Dorsolateral prefrontal cortex (tissue), 120 donors: ENCODE measurements at regions of chr11 and their contacts with region 1.

Region 1: DNA sequence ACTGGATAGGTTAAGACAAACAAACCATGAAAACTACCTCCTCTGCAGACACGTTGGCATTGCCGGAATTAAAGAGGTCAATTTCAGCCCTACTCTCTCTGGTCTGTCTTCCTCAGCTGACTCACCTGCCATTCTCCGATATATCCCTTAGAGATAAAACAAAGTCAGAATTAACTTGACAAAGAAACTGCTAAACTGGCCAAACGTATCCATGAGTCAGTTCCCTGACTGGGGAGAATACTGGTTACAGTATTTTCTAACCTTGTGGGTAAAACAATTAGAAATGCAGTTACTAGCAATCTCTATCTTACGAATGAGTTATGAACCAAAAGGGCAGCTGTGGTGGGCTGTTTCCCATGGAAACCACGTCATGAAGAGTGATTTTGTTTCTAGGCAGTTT is 96.2 kb downstream of the RDX start:
- DNase-seq: no peak
- H3K4me3 ChIP-seq: no peak overlapping the region
- H3K27ac ChIP-seq: no peak overlapping the region
- H3K27me3 ChIP-seq: no peaks in the 10 kb centered on the region
- CTCF ChIP-seq: no peak

Region 2: DNA sequence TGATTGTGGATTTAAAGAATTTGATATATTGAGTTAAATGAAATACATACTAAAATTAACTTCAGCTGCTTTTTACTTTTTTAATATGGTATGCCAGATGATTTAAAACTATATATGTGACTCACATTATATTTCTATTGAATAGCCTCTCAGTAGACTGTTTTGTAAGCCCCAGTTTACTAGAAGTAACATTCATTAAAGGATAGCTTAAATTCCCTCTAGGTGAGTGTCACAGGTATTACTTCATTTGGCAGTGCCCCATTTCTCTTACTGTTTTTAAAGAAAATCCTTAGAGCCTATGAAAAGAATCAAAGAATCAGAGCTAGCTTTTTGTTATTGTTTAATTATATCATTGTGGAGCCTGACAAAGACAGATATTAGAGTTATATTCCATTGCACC is 58.4 kb before region 1 on chr11:
- intact Hi-C with region 1: no loop called
- DNase-seq: no peak
- H3K4me3 ChIP-seq: no peak overlapping the region
- H3K27ac ChIP-seq: no peak overlapping the region
- H3K27me3 ChIP-seq: no peaks in the 10 kb centered on the region
- CTCF ChIP-seq: no peak

Region 3: DNA sequence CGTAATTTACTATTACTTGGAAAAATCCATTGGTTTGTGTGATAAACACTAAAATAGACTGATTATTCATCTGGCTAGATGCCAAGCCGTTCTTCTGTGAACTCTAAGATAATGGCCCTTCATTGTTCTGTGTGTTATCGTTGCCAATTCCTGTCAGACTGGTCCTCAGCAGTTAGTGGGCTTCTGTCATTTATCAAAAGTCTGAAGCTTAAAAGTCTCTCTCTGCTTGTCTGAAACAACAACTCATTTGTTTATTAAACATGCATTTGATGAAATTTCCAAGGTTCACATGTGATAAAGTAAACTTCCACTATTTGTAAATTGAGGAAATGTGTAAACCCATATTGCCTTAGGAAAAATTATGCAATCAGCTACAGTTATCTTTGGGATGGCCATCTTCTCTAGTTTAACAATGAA is 117.3 kb after region 1 on chr11:
- intact Hi-C with region 1: no loop called
- DNase-seq: no peak
- H3K4me3 ChIP-seq: peak overlapping the region in 12 of 59 donors; percentile 1 to 41 (median 18)
- H3K27ac ChIP-seq: peak overlapping the region in 41 of 59 donors; percentile 4 to 79 (median 53)
- H3K27me3 ChIP-seq: no peaks in the 10 kb centered on the region
- CTCF ChIP-seq: peak in 1 of 56 donors; percentile 11

Region 4: DNA sequence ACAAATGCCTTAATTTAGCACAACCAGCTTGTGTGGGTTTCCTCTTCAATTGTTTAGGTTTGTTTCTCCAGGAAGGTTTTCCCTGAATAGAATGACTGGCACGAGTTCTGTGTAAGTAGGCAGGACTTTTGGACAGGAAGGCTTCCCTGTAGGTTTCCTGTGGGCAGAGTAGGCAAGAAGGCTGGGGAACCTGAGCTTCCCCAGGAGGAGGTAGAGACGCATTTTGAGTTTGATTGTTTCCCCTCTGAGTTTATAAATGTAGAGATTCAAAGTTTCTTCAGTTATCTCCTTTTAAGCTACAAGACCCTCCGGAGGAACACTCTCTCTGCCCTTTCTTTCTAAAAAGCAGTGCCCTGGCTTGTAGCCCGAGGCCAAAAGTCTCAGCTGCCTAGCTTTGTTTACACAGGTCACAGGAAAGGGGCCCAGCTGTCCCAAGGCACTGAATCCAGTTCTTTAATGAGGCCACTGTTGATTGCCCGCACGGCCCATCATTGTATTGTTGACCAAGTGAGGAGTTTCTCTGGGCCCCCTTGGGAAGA is 162.8 kb after region 1 on chr11:
- intact Hi-C with region 1: loop called (anchors 2 to 5 kb)
- DNase-seq: peak in 2 of 10 donors; percentile 39 to 58
- H3K4me3 ChIP-seq: peak overlapping the region in 24 of 59 donors; percentile 1 to 45 (median 21)
- H3K27ac ChIP-seq: peak overlapping the region; percentile 3 to 94 (median 81)
- H3K27me3 ChIP-seq: no peaks in the 10 kb centered on the region
- CTCF ChIP-seq: peak in 1 of 56 donors; percentile 15

Region 5: GRCh38 chr11:110429731-110430266 is 229.6 kb after region 1 on chr11 and contains the start of gene FDX1:
- intact Hi-C with region 1: loop called (anchors 2 to 5 kb)
- DNase-seq: peak; percentile 60 to 87 (median 74)
- H3K4me3 ChIP-seq: peak within 1 kb of the TSS; percentile 69 to 97 (median 88)
- H3K27ac ChIP-seq: peak within 1 kb of the TSS; percentile 67 to 98 (median 93)
- H3K27me3 ChIP-seq: no peaks in the 10 kb centered on the region
- CTCF ChIP-seq: peak in 55 of 56 donors; percentile 3 to 83 (median 60)
- total RNA-seq, gene FDX1: 7.2 to 13.9 (median 10.5) TPM